ENCODE measurements at regions of chr11 and their contacts with region 1.

Region 1: GRCh38 chr11:88016392-88017170 is 158.7 kb downstream of the RAB38 start:
- DNase-seq: peak; percentile 66
- H3K4me3 ChIP-seq: no peak overlapping the region
- H3K27ac ChIP-seq: no peak overlapping the region
- H3K4me1 ChIP-seq: no peaks in the 10 kb centered on the region
- H3K27me3 ChIP-seq: no peaks in the 10 kb centered on the region
- CTCF ChIP-seq: peak; percentile 79 to 81

Region 2: GRCh38 chr11:87840786-87841185 is 175.8 kb before region 1 on chr11:
- CTCF ChIA-PET with region 1: no interaction called
- dilution Hi-C with region 1: no loop called
- in situ Hi-C with region 1: no loop called
- intact Hi-C with region 1: no loop called
- DNase-seq: peak; percentile 16
- H3K4me3 ChIP-seq: no peak overlapping the region
- H3K27ac ChIP-seq: no peak overlapping the region
- H3K4me1 ChIP-seq: no peaks in the 10 kb centered on the region
- H3K27me3 ChIP-seq: no peaks in the 10 kb centered on the region
- CTCF ChIP-seq: no peak

Region 3: DNA sequence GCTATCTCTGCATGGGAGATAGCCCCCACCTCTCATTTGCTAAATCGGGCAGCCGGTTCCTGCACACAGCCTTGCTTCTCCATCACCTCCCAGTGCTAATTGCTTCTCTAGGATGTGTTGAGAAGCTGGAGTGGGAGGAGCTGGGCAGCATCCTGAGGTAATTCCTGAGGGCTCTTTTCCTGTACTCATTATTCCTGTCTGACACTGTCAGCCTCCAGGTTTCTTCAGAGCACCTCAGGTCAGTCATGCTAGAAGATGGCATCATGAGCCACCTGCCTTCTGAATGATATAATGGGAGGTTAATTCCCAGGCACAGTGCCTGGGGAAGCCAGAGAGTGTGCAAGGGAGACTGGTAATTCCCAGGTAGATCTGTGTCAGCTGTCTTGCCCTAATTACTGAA is 25.7 kb after region 1 on chr11:
- CTCF ChIA-PET with region 1: no interaction called
- dilution Hi-C with region 1: no loop called
- in situ Hi-C with region 1: no loop called
- intact Hi-C with region 1: no loop called
- DNase-seq: no peak
- H3K4me3 ChIP-seq: no peak overlapping the region
- H3K27ac ChIP-seq: no peak overlapping the region
- H3K4me1 ChIP-seq: no peaks in the 10 kb centered on the region
- H3K27me3 ChIP-seq: no peaks in the 10 kb centered on the region
- CTCF ChIP-seq: no peak

Region 4: DNA sequence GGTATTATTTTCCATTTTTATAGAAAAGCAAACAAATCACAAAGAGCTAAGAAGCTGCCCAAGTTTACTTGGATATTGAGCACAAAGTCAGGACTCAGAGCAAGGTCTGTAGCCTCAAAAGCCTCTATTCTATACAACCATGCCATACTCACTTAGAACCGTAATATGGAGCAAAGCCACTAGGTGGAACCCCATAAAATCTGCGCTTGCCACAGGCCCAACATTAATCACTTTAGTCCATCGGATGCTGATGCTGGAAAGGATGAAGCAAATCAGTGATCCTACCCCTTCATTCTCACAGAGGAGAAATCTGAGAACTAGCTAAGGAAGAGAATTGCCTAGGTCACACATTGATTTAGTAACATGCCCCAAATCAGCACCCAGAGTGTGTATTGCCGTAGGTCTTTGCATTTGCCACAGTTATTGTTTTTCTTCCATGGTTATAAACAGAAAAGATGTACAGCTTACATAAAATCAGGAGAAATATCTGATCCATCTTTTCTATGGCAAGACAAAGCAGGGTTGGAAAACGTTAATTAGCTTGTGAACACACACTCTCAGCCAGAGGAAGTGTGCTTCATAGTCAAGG is 215.4 kb after region 1 on chr11:
- CTCF ChIA-PET with region 1: no interaction called
- dilution Hi-C with region 1: no loop called
- in situ Hi-C with region 1: no loop called
- intact Hi-C with region 1: loop called (anchors 1 kb)
- DNase-seq: peak; percentile 34
- H3K4me3 ChIP-seq: no peak overlapping the region
- H3K27ac ChIP-seq: no peak overlapping the region
- H3K4me1 ChIP-seq: no peaks in the 10 kb centered on the region
- H3K27me3 ChIP-seq: no peaks in the 10 kb centered on the region
- CTCF ChIP-seq: peak; percentile 72 to 75

Region 5: DNA sequence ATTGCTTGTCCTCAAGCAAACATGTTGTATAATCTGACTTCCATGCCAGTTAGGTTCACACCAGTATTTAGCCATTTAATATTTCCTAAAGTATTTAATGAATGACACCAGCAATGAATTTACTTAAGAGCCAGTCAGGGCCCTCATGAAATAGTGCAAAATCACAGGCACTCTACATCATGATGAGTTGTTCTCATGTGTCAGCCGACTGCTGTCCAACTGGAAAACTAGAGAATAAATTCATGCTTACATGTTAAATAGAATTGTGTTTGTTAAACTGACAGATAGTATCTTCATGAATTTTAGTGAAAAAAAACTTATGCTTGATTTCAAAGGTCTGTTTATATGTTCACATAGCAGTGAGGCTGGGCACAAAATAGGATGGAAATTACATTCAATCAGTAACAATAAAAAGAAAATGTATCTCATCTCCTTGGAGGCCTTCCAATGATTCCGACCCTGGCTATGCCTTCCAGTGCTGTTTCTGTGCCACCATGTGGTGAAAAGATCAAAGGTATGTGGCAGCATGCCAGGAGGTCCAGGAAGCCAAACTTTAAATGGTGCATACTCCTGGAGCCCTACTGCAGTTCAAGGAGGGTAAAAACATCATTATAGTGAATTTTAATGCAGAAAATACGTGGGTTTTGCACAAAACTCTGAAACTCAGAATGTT is 275.7 kb after region 1 on chr11:
- CTCF ChIA-PET with region 1: no interaction called
- dilution Hi-C with region 1: no loop called
- in situ Hi-C with region 1: loop called (anchors 25 kb)
- intact Hi-C with region 1: no loop called
- DNase-seq: peak; percentile 35
- H3K4me3 ChIP-seq: no peak overlapping the region
- H3K27ac ChIP-seq: no peak overlapping the region
- H3K4me1 ChIP-seq: peaks cover 6% of the 10 kb centered on the region
- H3K27me3 ChIP-seq: no peaks in the 10 kb centered on the region
- CTCF ChIP-seq: peak; percentile 7 to 37

Measured in mammary epithelial cell (primary cell).